A673 (cell line): ENCODE measurements at regions of chr6 and their contacts with region 1.

Region 1: GRCh38 chr6:166382933-166383801 is at the start of gene MPC1:
- DNase-seq: peak; percentile 98
- H3K4me3 ChIP-seq: peak within 1 kb of the TSS; percentile 86
- H3K27ac ChIP-seq: peak within 1 kb of the TSS; percentile 89
- H3K4me1 ChIP-seq: peaks cover 4% of the 10 kb centered on the region
- H3K27me3 ChIP-seq: no peaks in the 10 kb centered on the region
- CTCF ChIP-seq: no peak
- total RNA-seq, gene MPC1: 34.9 and 35.9 TPM in 2 replicates

Region 2: GRCh38 chr6:166275714-166276166 is 107.4 kb before region 1 on chr6:
- CTCF ChIA-PET with region 1: no interaction called
- POLR2A ChIA-PET with region 1: no interaction called
- intact Hi-C with region 1: loop called (anchors 5 kb)
- DNase-seq: peak; percentile 68
- H3K4me3 ChIP-seq: no peak overlapping the region
- H3K27ac ChIP-seq: no peak overlapping the region
- H3K4me1 ChIP-seq: no peaks in the 10 kb centered on the region
- H3K27me3 ChIP-seq: no peaks in the 10 kb centered on the region
- CTCF ChIP-seq: peak; percentile 99

Region 3: GRCh38 chr6:166342349-166343149 is 40.6 kb before region 1 on chr6 and contains the start of gene SFT2D1:
- CTCF ChIA-PET with region 1: no interaction called
- POLR2A ChIA-PET with region 1: no interaction called
- intact Hi-C with region 1: loop called (anchors 5 kb)
- DNase-seq: peak; percentile 91
- H3K4me3 ChIP-seq: peak within 1 kb of the TSS; percentile 82
- H3K27ac ChIP-seq: peak within 1 kb of the TSS; percentile 99
- H3K4me1 ChIP-seq: peaks cover 5% of the 10 kb centered on the region
- H3K27me3 ChIP-seq: no peaks in the 10 kb centered on the region
- CTCF ChIP-seq: no peak
- total RNA-seq, gene SFT2D1: 52.8 and 62.0 TPM in 2 replicates

Region 4: GRCh38 chr6:166598441-166599138 is 215.4 kb after region 1 on chr6:
- CTCF ChIA-PET with region 1: no interaction called
- POLR2A ChIA-PET with region 1: no interaction called
- intact Hi-C with region 1: no loop called
- DNase-seq: no peak
- H3K4me3 ChIP-seq: no peak overlapping the region
- H3K27ac ChIP-seq: no peak overlapping the region
- H3K4me1 ChIP-seq: no peaks in the 10 kb centered on the region
- H3K27me3 ChIP-seq: no peaks in the 10 kb centered on the region
- CTCF ChIP-seq: no peak